ENCODE measurements at regions of chr6 and their contacts with region 1.

Region 1: GRCh38 chr6:49535795-49536194 is 14.7 kb upstream of the C6orf141 start:
- DNase-seq: no peak
- ATAC-seq: no peak

Region 2: DNA sequence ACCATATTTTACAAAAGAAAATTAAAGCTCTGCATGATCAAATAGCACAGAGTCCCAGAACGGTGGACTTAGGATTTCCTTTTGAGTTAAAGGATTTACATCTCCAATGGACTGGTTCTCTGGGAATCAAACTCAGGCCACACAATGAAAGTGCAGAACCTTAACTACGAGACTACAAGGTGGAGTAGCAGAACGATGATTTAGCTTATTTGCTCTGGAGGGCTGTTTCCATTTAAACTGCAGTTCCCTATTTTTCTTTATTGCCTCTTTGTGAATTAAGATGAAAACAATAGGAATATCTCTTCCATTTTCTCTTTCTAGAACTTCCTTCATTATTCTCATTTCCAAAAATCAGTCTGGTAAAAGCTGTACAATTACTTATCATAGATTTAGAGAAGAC is 1348.6 kb after region 1 on chr6:
- intact Hi-C with region 1: loop called (anchors 5 kb)
- DNase-seq: no peak
- ATAC-seq: no peak

Measured in sciatic nerve (tissue), 2 donors.